AG04449 (cell line): ENCODE measurements at regions of chr2 and their contacts with region 1.

Region 1: GRCh38 chr2:30157616-30158015 is 10.8 kb downstream of the YPEL5 start:
- DNase-seq: no peak
- H3K4me3 ChIP-seq: no peak overlapping the region
- CTCF ChIP-seq: no peak

Region 2: GRCh38 chr2:30146438-30147147 is 11.0 kb before region 1 on chr2 and contains the start of gene YPEL5:
- CTCF ChIA-PET with region 1: interaction called, 164 read pairs
- POLR2A ChIA-PET with region 1: interaction called, 3 read pairs
- DNase-seq: peak; percentile 97
- H3K4me3 ChIP-seq: peak within 1 kb of the TSS; percentile 82
- CTCF ChIP-seq: no peak